Panc1 (cell line): ENCODE measurements at regions of chr13 and their contacts with region 1.

Region 1: DNA sequence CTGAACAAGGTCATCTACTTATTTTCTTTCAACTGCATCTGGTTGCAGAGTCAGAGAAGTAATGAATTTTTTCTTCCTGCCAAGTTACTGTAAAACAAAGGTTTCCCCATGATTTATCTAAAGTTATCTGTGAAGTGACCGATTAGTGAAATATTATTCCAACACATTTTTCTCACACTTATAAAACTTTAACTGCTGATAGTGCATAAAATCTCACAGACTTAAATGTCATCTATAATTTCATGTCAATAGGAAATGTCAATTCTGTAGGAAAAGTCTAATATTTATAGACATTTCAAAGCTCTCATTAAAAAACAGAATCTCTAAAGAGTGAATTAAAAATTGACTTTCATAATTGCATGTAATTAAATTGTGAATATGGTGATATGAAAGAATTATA is 397.2 kb downstream of the SLITRK1 start:
- DNase-seq: no peak
- ATAC-seq: no peak
- H3K4me3 ChIP-seq: no peak overlapping the region
- H3K27ac ChIP-seq: no peak overlapping the region
- H3K4me1 ChIP-seq: no peaks in the 10 kb centered on the region
- H3K27me3 ChIP-seq: no peaks in the 10 kb centered on the region
- CTCF ChIP-seq: no peak

Region 2: GRCh38 chr13:83503424-83503823 is 18.3 kb after region 1 on chr13:
- CTCF ChIA-PET with region 1: no interaction called
- POLR2A ChIA-PET with region 1: interaction called, 12 read pairs
- in situ Hi-C with region 1: no loop called
- intact Hi-C with region 1: no loop called
- DNase-seq: no peak
- ATAC-seq: no peak
- H3K4me3 ChIP-seq: no peak overlapping the region
- H3K27ac ChIP-seq: no peak overlapping the region
- H3K4me1 ChIP-seq: no peaks in the 10 kb centered on the region; the same call in 1 of the 2 replicates
- H3K27me3 ChIP-seq: no peaks in the 10 kb centered on the region
- CTCF ChIP-seq: no peak